MCF 10A (cell line): ENCODE measurements at regions of chr16 and their contacts with region 1.

Region 1: DNA sequence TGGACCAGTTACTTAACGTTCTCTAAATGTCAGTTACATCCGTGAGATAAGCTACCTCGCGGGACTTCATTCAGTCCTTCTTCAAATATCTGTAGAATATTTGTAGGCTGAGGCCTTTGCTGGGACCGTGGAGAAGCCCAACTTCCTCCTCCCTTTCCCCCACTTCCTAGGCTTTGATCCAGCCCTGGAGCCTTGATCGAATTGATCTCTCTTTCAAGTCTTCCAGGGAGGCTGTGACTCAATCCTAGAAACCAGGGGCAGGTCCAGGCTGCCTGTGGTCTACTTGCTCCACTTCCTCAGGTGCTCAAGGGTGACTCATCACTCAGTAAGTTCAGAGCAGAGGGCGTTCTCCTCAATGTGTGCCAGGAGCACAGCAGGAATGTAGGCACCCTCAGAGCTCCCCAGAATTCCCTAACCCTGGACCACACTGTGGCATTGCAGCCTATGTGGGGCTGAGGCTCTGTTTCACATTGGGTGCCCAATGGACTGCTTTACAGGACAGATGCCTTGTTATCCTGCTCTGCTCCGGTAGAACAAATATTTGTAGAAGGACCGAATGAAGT is 11.2 kb upstream of the CEP20 start:
- DNase-seq: peak; percentile 96
- H3K4me3 Mint-ChIP-seq: peak overlapping the region; percentile 9
- H3K27ac Mint-ChIP-seq: peak overlapping the region; percentile 87
- H3K4me1 Mint-ChIP-seq: peaks cover 27% of the 10 kb centered on the region
- H3K27me3 Mint-ChIP-seq: no peaks in the 10 kb centered on the region
- CTCF ChIP-seq: no peak

Region 2: DNA sequence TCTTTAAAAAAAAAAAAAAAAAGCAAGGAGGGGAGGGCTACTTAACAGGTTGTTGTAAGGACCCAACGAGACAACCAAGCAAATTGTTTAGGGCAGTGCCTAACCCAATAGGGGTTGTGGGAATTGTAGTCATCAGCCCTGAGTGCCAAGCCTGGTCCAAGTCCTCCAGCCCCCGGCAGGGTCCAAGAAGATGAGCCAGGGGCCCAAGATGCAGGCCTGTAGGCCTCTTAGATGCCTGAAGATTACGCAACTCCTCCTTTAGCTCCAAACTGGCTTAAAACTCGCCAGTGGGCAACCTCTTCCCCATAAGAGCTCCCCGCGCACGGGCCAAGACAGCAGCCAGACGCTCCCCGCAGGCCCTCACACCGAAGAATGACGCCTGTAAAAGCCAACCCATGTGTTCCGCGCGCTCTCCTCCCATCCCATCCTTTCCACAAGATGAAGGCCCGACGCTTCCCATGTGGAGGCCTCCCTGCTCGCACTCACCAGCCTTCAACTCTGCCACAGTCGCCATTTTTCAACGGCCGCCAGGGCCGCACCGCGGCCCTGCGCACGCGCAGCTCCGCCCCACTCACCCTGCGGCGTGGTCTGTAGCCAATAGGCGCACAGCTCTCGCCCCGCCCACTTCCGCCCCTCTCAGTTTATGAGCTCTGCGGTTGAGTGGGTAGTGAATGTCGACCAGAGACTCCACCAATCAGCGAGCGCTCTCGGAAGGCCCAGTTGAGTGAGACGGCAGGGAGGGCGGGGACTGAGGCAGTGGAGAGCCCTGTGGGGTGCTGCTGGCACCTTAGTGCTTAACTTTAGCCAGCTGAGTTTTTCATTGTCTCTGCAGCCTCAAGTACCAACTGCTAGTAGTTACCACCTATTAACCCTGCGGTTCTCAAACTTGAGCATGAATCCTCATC is 11.3 kb before region 1 on chr16 and contains the start of gene CEP20:
- CTCF ChIA-PET with region 1: interaction called, 6 read pairs
- POLR2A ChIA-PET with region 1: interaction called, 97 read pairs
- intact Hi-C with region 1: no loop called
- DNase-seq: peak; percentile 99
- H3K4me3 Mint-ChIP-seq: peak within 1 kb of the TSS; percentile 94
- H3K27ac Mint-ChIP-seq: peak within 1 kb of the TSS; percentile 91
- H3K4me1 Mint-ChIP-seq: peaks cover 15% of the 10 kb centered on the region
- H3K27me3 Mint-ChIP-seq: no peaks in the 10 kb centered on the region
- CTCF ChIP-seq: no peak
- total RNA-seq, gene CEP20: 54.7 and 70.1 TPM in 2 replicates

Region 3: DNA sequence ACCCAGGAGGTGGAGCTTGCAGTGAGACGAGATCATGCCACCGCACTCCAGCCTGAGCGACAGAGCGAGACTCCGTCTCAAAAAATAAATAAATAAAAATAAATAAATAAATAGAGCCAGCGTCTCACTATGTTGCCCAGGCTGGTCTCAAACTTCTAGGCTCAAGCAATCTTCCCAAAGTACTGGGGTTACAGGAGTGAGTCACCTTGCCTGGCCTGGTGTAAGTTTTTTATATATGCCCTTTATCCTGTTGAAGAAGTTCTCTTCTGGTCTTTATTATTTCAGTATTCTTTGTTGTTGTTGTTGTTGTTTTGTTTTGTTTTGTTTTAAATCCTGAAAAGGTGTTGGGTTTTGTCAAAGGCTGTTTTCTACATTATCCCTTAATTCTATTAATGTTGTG is 19.7 kb after region 1 on chr16:
- CTCF ChIA-PET with region 1: interaction called, 4 read pairs
- POLR2A ChIA-PET with region 1: interaction called, 32 read pairs
- intact Hi-C with region 1: loop called (anchors 1 kb)
- DNase-seq: no peak
- H3K4me3 Mint-ChIP-seq: no peak overlapping the region
- H3K27ac Mint-ChIP-seq: peak overlapping the region; percentile 89
- H3K4me1 Mint-ChIP-seq: peaks cover 14% of the 10 kb centered on the region
- H3K27me3 Mint-ChIP-seq: no peaks in the 10 kb centered on the region
- CTCF ChIP-seq: no peak

Region 4: DNA sequence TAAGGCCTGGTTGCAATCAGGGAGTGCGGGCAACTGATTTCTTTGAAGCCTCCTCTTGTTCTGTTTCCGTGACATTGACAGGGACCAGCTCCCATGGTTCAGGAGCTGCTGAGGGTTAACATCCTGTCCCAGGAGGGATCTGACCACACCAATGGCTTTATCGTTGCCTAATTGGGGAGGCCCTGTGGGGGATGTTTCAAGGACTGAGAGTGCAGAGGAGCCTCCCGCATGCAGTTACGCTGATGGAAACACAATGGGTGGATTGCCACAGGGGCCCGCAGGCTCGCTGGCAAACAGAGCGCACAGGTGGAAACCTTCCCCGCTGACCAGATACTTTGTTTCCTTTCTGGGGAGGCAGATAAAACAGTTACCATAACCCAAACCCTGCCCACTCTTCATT is 26.0 kb after region 1 on chr16:
- CTCF ChIA-PET with region 1: interaction called, 4 read pairs
- POLR2A ChIA-PET with region 1: interaction called, 32 read pairs
- intact Hi-C with region 1: loop called (anchors 1 kb)
- DNase-seq: no peak
- H3K4me3 Mint-ChIP-seq: no peak overlapping the region
- H3K27ac Mint-ChIP-seq: no peak overlapping the region
- H3K4me1 Mint-ChIP-seq: peaks cover 10% of the 10 kb centered on the region
- H3K27me3 Mint-ChIP-seq: no peaks in the 10 kb centered on the region
- CTCF ChIP-seq: no peak

Region 5: DNA sequence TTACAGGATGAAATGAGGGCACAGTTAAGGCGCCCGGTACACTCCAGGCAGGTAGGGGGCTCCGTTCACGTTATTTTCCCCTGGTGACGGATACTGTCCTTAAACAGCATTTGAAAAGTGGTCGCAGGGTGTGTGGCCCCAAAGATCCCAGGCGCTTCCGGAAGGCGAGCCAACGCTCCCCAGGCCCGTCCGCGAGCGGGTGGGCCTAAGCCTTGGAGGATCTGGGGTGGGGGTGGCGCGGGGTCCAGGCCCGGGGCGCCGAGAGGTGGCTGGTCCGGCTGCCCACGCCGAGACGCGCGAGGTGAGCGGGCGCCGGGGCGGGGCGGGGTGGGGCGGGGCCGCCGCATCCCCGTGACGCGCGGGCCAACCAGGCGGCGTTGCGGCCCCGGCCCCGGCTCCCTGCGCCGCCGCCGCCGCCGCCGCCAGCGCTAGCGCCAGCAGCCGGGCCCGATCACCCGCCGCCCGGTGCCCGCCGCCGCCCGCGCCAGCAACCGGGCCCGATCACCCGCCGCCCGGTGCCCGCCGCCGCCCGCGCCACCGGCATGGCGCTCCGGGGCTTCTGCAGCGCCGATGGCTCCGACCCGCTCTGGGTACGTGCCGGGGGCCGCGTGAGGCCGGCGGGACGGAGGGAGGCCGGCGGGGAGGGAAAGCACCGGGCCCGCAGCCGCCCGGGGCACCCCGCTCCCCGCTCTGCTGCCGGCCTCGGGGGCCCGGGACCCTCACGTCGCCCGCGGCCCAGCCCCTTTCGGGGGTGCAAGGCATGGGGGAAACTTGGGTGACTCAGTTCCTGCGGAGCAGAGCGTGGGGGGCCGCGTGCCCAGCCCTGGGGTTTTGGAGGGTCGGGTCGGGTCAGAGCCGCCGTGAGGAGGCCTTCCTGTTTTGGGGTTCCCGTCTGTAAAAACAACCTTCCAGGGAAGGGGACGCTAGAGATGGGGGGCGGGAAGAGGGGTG is 49.9 kb after region 1 on chr16 and contains the start of gene ABCC1:
- CTCF ChIA-PET with region 1: interaction called, 3 read pairs
- POLR2A ChIA-PET with region 1: interaction called, 29 read pairs
- intact Hi-C with region 1: loop called (anchors 2 kb)
- DNase-seq: no peak
- H3K4me3 Mint-ChIP-seq: peak within 1 kb of the TSS; percentile 87
- H3K27ac Mint-ChIP-seq: peak within 1 kb of the TSS; percentile 92
- H3K4me1 Mint-ChIP-seq: peaks cover 23% of the 10 kb centered on the region
- H3K27me3 Mint-ChIP-seq: no peaks in the 10 kb centered on the region
- CTCF ChIP-seq: no peak
- total RNA-seq, gene ABCC1: 72.5 and 95.3 TPM in 2 replicates

Region 6: GRCh38 chr16:15966420-15967222 is 67.0 kb after region 1 on chr16:
- CTCF ChIA-PET with region 1: no interaction called
- POLR2A ChIA-PET with region 1: interaction called, 17 read pairs
- intact Hi-C with region 1: no loop called
- DNase-seq: peak; percentile 91
- H3K4me3 Mint-ChIP-seq: peak overlapping the region; percentile 30
- H3K27ac Mint-ChIP-seq: peak overlapping the region; percentile 75
- H3K4me1 Mint-ChIP-seq: peaks cover 24% of the 10 kb centered on the region
- H3K27me3 Mint-ChIP-seq: no peaks in the 10 kb centered on the region
- CTCF ChIP-seq: no peak

Region 7: GRCh38 chr16:16021988-16022682 is 122.5 kb after region 1 on chr16:
- CTCF ChIA-PET with region 1: no interaction called
- POLR2A ChIA-PET with region 1: interaction called, 12 read pairs
- intact Hi-C with region 1: no loop called
- DNase-seq: peak; percentile 97
- H3K4me3 Mint-ChIP-seq: peak overlapping the region; percentile 28
- H3K27ac Mint-ChIP-seq: peak overlapping the region; percentile 69
- H3K4me1 Mint-ChIP-seq: peaks cover 44% of the 10 kb centered on the region
- H3K27me3 Mint-ChIP-seq: no peaks in the 10 kb centered on the region
- CTCF ChIP-seq: no peak